ENCODE measurements at regions of chr3 and their contacts with region 1.

Region 1: DNA sequence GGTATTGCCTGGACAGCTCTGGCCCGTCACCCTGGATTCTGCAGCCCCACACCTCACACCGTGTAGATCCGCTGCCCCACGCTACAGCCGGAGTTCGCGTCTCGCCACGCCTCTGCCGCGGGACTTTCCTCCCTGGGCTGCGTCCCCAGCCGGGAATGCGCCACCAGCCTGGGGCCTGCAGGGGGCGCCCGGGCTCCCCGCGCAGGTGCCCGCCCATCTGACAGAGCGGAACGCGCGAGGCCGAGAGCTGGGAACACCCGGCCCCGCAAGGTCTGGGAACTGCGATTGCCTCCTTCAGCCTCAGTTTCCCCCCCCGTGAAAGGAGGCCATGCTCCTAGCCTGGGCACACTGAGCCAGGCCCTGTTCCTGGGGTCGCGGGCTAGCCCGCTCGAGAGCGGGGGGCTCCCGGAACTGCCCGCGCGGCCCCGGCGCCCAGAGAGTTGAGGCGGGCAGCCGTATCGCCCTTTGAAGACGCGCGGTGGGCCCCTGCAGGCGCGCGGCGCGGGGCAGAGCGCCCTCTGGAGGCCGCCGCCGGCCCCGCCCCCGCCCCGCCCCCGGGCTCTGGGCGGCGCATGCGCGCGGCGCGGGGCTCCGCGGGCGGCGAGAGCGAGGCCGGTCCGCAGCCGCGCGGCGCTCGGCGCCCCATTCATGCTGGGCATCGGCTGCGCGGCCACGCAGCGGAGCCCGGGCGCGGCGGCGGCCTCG is at the start of gene PLXNA1:
- DNase-seq: peak; percentile 78 to 94 (median 90)
- ATAC-seq: peak; percentile 91
- H3K4me3 ChIP-seq: peak within 1 kb of the TSS; percentile 57
- H3K4me3 Mint-ChIP-seq: peak within 1 kb of the TSS; percentile 83 to 92 (median 88)
- H3K27ac ChIP-seq: peak within 1 kb of the TSS; percentile 91
- H3K27ac Mint-ChIP-seq: peak within 1 kb of the TSS; percentile 79 to 96 (median 90)
- H3K4me1 ChIP-seq: peaks cover 6 to 8% of the 10 kb centered on the region in 2 donors
- H3K4me1 Mint-ChIP-seq: peaks cover 0 to 28% (median 9%) of the 10 kb centered on the region in 7 donors
- H3K27me3 ChIP-seq: no peaks in the 10 kb centered on the region
- H3K27me3 Mint-ChIP-seq: peaks cover 5 to 19% (median 11%) of the 10 kb centered on the region in 5 donors
- total RNA-seq, gene PLXNA1: 7.8 to 16.8 (median 10.7) TPM

Region 2: GRCh38 chr3:125916376-125916978 is 1066.1 kb before region 1 on chr3:
- CTCF ChIA-PET with region 1: no interaction called
- POLR2A ChIA-PET with region 1: no interaction called
- intact Hi-C with region 1: loop called in 1 of 2 experiments (anchors 1 kb)
- DNase-seq: peak in 6 of 9 donors; percentile 91 to 96 (median 94)
- ATAC-seq: peak; percentile 98
- H3K4me3 ChIP-seq: peak overlapping the region; percentile 75
- H3K4me3 Mint-ChIP-seq: peak overlapping the region; percentile 82 to 94 (median 91)
- H3K27ac ChIP-seq: peak overlapping the region; percentile 83
- H3K27ac Mint-ChIP-seq: peak overlapping the region; percentile 86 to 99 (median 94)
- H3K4me1 ChIP-seq: no peaks in the 10 kb centered on the region
- H3K4me1 Mint-ChIP-seq: peaks cover 6 to 18% (median 13%) of the 10 kb centered on the region in 7 donors
- H3K27me3 ChIP-seq: no peaks in the 10 kb centered on the region
- H3K27me3 Mint-ChIP-seq: no peaks in the 10 kb centered on the region

Region 3: DNA sequence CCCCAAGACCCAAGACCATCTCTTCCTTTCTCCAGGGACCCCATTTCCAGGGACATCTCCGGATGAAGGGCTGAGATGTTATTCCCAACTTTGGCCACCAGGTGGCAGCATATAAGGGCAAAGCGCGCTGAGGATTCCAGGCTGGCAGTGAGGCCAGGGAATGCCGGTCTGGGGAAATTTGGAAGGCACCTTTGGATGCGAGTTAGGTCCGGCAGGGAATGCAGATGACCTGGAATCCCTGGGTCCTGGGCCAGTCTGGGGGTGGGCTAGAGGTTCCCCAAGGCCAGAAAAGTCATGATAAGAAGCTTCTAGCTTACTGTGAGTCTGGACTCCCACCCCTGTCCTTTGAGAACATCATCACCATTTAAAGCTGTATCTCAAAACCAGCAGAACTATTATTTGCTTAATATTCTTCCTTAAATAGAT is 460.2 kb before region 1 on chr3:
- CTCF ChIA-PET with region 1: no interaction called
- POLR2A ChIA-PET with region 1: no interaction called
- intact Hi-C with region 1: loop called in 1 of 2 experiments (anchors 1 kb)
- DNase-seq: peak in 8 of 9 donors; percentile 17 to 52 (median 34)
- ATAC-seq: no peak
- H3K4me3 ChIP-seq: no peak overlapping the region
- H3K4me3 Mint-ChIP-seq: no peak overlapping the region
- H3K27ac ChIP-seq: no peak overlapping the region
- H3K27ac Mint-ChIP-seq: no peak overlapping the region
- H3K4me1 ChIP-seq: no peaks in the 10 kb centered on the region
- H3K4me1 Mint-ChIP-seq: peaks cover 0 to 4% (median 0%) of the 10 kb centered on the region in 7 donors
- H3K27me3 ChIP-seq: no peaks in the 10 kb centered on the region
- H3K27me3 Mint-ChIP-seq: peaks cover 12 to 22% (median 21%) of the 10 kb centered on the region in 5 donors

Region 4: GRCh38 chr3:126703512-126704462 is 278.8 kb before region 1 on chr3 and contains the start of gene CHCHD6:
- CTCF ChIA-PET with region 1: no interaction called
- POLR2A ChIA-PET with region 1: interaction called, 3 read pairs
- intact Hi-C with region 1: loop called (anchors 1 kb)
- DNase-seq: peak; percentile 92 to 99 (median 96)
- ATAC-seq: peak; percentile 99
- H3K4me3 ChIP-seq: peak within 1 kb of the TSS; percentile 82
- H3K4me3 Mint-ChIP-seq: peak within 1 kb of the TSS; percentile 83 to 99 (median 97)
- H3K27ac ChIP-seq: peak within 1 kb of the TSS; percentile 69
- H3K27ac Mint-ChIP-seq: peak within 1 kb of the TSS; percentile 71 to 98 (median 92)
- H3K4me1 ChIP-seq: peaks cover 6 to 13% of the 10 kb centered on the region in 2 donors
- H3K4me1 Mint-ChIP-seq: peaks cover 17 to 28% (median 21%) of the 10 kb centered on the region in 7 donors
- H3K27me3 ChIP-seq: peaks cover 0 to 5% of the 10 kb centered on the region in 2 donors
- H3K27me3 Mint-ChIP-seq: peaks cover 10 to 42% (median 19%) of the 10 kb centered on the region in 5 donors
- total RNA-seq, gene CHCHD6: 5.4 to 14.0 (median 10.0) TPM

Region 5: GRCh38 chr3:127304121-127304744 is 321.6 kb after region 1 on chr3:
- CTCF ChIA-PET with region 1: no interaction called
- POLR2A ChIA-PET with region 1: no interaction called
- intact Hi-C with region 1: no loop called
- DNase-seq: no peak
- ATAC-seq: no peak
- H3K4me3 ChIP-seq: no peak overlapping the region
- H3K4me3 Mint-ChIP-seq: no peak overlapping the region
- H3K27ac ChIP-seq: no peak overlapping the region
- H3K27ac Mint-ChIP-seq: no peak overlapping the region
- H3K4me1 ChIP-seq: no peaks in the 10 kb centered on the region
- H3K4me1 Mint-ChIP-seq: peaks cover 0 to 4% (median 0%) of the 10 kb centered on the region in 7 donors
- H3K27me3 ChIP-seq: peaks cover 0 to 4% of the 10 kb centered on the region in 2 donors
- H3K27me3 Mint-ChIP-seq: peaks cover 6 to 35% (median 16%) of the 10 kb centered on the region in 5 donors

Region 6: DNA sequence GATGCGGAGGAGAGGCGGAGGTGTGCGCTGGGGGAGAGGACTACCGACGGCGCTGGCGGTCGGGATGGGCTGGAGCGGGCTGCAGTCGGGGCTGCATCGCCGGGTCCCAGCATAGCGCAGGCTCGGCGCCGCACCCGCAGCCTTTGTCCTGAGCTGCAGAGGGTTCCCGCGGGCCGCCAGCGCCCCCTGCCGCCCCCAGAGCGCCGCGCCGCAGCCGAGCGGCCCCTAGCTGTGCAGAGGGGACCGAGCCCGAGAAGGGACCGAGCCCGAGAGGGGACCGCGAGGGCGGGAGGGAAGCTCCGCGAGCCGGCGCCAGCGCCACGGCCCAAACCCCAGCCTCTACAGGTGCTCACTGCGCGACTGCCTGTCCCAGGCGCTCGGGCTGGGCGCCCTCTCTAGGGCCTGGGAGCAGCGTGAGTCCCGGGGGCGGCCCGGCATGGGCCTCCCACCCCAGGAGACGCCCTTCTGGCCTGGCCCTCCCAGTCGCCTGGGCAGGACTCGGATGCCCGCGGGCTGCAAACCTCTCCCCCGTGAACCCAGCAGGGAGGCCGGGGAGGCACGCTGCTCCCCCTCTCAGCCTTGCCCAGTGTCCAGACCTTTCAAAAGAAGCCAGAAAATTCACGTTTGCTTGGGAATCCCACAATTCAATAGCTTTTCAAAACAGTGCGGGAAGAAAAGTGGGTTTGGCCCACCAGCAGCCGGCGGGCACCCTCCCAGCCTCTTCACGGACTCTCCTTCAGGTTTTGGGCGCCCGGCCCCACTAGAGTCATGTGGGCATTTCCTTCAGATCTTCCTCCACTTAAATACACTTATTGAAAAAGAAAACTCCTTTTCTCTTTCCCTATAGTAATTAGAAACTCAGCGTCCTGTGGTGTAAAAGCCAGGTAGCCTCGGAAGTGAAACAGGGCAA is 473.2 kb after region 1 on chr3:
- CTCF ChIA-PET with region 1: no interaction called
- POLR2A ChIA-PET with region 1: no interaction called
- intact Hi-C with region 1: loop called in 1 of 2 experiments (anchors 5 kb)
- DNase-seq: peak in 8 of 9 donors; percentile 14 to 70 (median 41)
- ATAC-seq: peak; percentile 75
- H3K4me3 ChIP-seq: no peak overlapping the region
- H3K4me3 Mint-ChIP-seq: peak overlapping the region in 9 of 10 donors; percentile 5 to 77 (median 53)
- H3K27ac ChIP-seq: no peak overlapping the region
- H3K27ac Mint-ChIP-seq: no peak overlapping the region
- H3K4me1 ChIP-seq: no peaks in the 10 kb centered on the region
- H3K4me1 Mint-ChIP-seq: peaks cover 4 to 18% (median 14%) of the 10 kb centered on the region in 7 donors
- H3K27me3 ChIP-seq: peaks cover 0 to 8% of the 10 kb centered on the region in 2 donors
- H3K27me3 Mint-ChIP-seq: peaks cover 47 to 72% (median 65%) of the 10 kb centered on the region in 5 donors

Region 7: GRCh38 chr3:127672516-127673190 is 690.0 kb after region 1 on chr3 and contains the start of gene ABTB1:
- CTCF ChIA-PET with region 1: no interaction called
- POLR2A ChIA-PET with region 1: no interaction called
- intact Hi-C with region 1: loop called in 1 of 2 experiments (anchors 2 kb)
- DNase-seq: peak; percentile 73 to 88 (median 83)
- ATAC-seq: peak; percentile 93
- H3K4me3 ChIP-seq: peak within 1 kb of the TSS; percentile 86
- H3K4me3 Mint-ChIP-seq: peak within 1 kb of the TSS; percentile 88 to 96 (median 94)
- H3K27ac ChIP-seq: peak within 1 kb of the TSS; percentile 98
- H3K27ac Mint-ChIP-seq: peak within 1 kb of the TSS; percentile 92 to 98 (median 97)
- H3K4me1 ChIP-seq: peaks cover 13 to 17% of the 10 kb centered on the region in 2 donors
- H3K4me1 Mint-ChIP-seq: peaks cover 17 to 37% (median 33%) of the 10 kb centered on the region in 7 donors
- H3K27me3 ChIP-seq: no peaks in the 10 kb centered on the region
- H3K27me3 Mint-ChIP-seq: no peaks in the 10 kb centered on the region
- total RNA-seq, gene ABTB1: 26.7 to 182 (median 124) TPM